HCT116 (cell line): ENCODE measurements at regions of chr2 and their contacts with region 1.

Region 1: GRCh38 chr2:3558205-3559014 is at the start of gene RNASEH1:
- DNase-seq: peak; percentile 98
- ATAC-seq: peak; percentile 98
- H3K4me3 ChIP-seq: peak within 1 kb of the TSS; percentile 84 to 98
- H3K27ac ChIP-seq: peak within 1 kb of the TSS; percentile 88
- H3K4me1 ChIP-seq: peaks cover 4 to 18% of the 10 kb centered on the region in 2 experiments; a peak in 3 of 4 replicates
- H3K27me3 ChIP-seq: no peaks in the 10 kb centered on the region
- CTCF ChIP-seq: no peak
- POLR2A ChIP-seq: no peak
- RAD21 ChIP-seq: no peak
- total RNA-seq, gene RNASEH1: 38.2 TPM

Region 2: DNA sequence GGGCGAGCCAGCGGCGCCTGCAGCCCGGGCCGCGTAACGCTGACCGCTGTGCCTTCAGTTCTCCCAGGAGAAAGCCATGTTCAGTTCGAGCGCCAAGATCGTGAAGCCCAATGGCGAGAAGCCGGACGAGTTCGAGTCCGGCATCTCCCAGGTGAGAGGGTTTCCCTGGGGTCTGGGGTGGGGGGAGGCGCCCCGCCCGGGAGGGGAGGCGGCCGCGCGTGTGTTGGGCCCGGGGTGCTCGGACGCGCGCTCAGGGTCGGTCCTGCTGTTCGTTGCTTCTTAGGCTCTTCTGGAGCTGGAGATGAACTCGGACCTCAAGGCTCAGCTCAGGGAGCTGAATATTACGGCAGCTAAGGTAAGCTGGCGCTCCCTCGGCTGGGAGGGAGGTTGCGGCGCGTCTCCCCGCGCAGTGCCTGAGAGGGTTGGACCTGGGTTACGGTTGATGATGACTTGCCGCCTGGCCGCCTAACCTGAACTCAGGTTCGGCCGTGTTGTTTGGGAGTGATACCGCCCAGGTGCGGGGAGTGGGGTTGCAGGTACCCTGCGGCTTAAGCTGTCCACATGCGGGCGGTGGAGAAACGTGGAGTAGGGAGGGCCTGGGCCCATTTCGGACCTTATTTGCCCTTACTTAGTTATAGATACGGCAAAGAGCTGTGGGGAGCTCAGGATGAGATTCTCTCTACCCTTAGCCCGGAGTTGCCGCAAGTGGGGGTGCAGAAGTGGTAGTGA is 17.3 kb after region 1 on chr2:
- CTCF ChIA-PET with region 1: no interaction called
- POLR2A ChIA-PET with region 1: interaction called, 5 read pairs
- RAD21 ChIA-PET with region 1: no interaction called
- intact Hi-C with region 1: loop called (anchors 1 kb)
- DNase-seq: no peak
- ATAC-seq: peak; percentile 56
- H3K4me3 ChIP-seq: peak overlapping the region; percentile 88 to 95
- H3K27ac ChIP-seq: peak overlapping the region; percentile 76
- H3K4me1 ChIP-seq: peaks cover 5 to 27% of the 10 kb centered on the region in 2 experiments; a peak in 3 of 4 replicates
- H3K27me3 ChIP-seq: no peaks in the 10 kb centered on the region
- CTCF ChIP-seq: no peak
- POLR2A ChIP-seq: no peak
- RAD21 ChIP-seq: no peak

Region 3: GRCh38 chr2:3604991-3605961 is 46.9 kb after region 1 on chr2:
- CTCF ChIA-PET with region 1: no interaction called
- POLR2A ChIA-PET with region 1: no interaction called
- RAD21 ChIA-PET with region 1: no interaction called
- intact Hi-C with region 1: loop called (anchors 1 kb)
- DNase-seq: peak; percentile 82
- ATAC-seq: peak; percentile 73
- H3K4me3 ChIP-seq: peak overlapping the region; percentile 28 to 39; a peak in 3 of 4 replicates
- H3K27ac ChIP-seq: peak overlapping the region; percentile 86
- H3K4me1 ChIP-seq: peaks cover 12 to 19% of the 10 kb centered on the region in 2 experiments
- H3K27me3 ChIP-seq: no peaks in the 10 kb centered on the region
- CTCF ChIP-seq: no peak
- POLR2A ChIP-seq: no peak
- RAD21 ChIP-seq: no peak